ENCODE measurements at regions of chr3 and their contacts with region 1.

Region 1: DNA sequence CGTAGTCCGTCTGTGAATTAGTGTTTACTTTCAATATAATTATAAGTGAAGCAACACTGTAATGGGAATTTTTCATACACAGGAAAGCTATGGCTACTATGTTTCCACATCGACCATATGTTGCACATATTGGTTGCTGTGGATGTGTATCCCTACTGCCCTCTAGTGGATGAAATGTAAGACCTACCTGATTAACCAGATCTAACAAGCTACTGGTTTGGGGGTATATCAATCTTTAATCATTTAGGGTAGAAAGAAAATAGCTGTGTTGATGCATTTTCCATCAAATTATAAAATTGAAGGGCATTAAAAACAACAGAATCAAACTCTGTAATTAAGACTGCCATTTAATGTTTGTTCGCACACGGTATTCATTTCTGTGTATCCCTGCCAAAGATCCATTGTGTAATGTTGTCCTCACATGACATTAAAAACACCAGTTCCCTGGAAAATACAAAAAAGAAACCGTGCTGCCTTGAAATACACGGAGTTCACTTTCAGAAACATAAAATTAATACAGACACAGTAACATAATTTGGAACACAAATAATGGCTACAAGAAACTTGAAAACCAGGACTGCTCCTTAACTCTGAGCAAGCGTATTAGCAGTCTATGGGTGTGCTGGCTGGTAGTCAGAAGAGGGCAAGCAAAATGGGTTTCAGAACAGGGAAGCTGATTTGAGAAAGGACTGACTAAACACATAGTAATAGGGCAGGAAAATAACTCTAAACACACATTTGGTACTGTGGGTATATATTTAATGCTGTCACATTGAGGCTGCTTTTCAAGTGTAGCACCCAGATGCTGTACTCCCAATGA is 125.1 kb downstream of the TIGIT start:
- H3K4me3 Mint-ChIP-seq: no peak overlapping the region
- H3K27ac Mint-ChIP-seq: no peak overlapping the region
- H3K4me1 Mint-ChIP-seq: no peaks in the 10 kb centered on the region
- H3K27me3 Mint-ChIP-seq: no peaks in the 10 kb centered on the region

Region 2: GRCh38 chr3:114128231-114128630 is 290.7 kb before region 1 on chr3:
- intact Hi-C with region 1: no loop called
- H3K4me3 Mint-ChIP-seq: no peak overlapping the region
- H3K27ac Mint-ChIP-seq: no peak overlapping the region
- H3K4me1 Mint-ChIP-seq: no peaks in the 10 kb centered on the region
- H3K27me3 Mint-ChIP-seq: no peaks in the 10 kb centered on the region

Region 3: DNA sequence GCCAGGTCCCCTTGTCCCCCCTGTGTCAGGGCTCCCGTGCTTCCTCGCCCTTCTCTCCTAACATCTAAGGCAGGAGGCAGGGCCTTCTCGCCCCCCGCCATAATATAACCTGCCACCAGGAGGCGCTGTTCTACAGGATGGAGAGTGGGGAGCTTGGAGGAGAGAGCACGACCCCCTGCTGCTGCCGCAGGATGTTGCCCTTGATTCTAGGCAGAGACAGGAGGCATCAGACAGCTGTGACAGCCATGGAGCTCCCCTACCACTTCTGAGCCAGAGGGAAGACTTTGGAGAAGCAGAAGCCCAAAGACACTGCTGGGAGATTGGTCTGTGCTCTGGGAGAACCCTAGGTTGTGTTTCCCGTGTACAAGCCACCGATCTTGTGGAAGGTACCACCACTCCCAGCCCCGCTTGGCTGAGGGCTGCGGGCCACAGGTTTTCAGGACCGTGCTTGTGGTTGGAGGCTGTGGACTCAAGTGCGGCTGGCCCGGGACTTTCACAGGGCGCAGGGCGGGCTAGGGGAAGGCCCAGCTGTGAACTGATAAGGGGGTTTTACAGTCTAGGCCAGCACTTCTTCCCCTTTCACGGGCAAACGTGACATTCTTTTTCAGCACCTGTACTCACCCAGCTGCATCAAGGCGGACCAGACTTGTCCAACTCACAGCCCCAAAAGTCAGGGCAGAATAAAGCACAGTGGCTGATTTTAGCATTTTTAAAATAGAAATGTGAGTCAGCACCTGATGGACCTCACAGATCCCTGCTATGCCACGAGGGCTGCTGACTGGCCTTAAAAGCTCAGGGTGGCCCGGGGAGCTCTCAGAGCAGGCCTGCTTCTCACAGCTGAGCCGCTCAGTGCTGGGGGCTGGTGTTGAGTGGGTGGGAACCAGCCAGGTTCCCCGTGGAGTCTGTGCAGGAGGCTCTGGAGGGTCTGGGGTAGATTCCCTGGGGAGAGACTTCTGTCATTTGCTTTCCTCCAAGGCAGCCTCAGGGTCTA is 127.7 kb before region 1 on chr3:
- intact Hi-C with region 1: loop called (anchors 5 kb)
- H3K4me3 Mint-ChIP-seq: no peak overlapping the region
- H3K27ac Mint-ChIP-seq: no peak overlapping the region
- H3K4me1 Mint-ChIP-seq: peaks cover 6% of the 10 kb centered on the region
- H3K27me3 Mint-ChIP-seq: no peaks in the 10 kb centered on the region

Region 4: DNA sequence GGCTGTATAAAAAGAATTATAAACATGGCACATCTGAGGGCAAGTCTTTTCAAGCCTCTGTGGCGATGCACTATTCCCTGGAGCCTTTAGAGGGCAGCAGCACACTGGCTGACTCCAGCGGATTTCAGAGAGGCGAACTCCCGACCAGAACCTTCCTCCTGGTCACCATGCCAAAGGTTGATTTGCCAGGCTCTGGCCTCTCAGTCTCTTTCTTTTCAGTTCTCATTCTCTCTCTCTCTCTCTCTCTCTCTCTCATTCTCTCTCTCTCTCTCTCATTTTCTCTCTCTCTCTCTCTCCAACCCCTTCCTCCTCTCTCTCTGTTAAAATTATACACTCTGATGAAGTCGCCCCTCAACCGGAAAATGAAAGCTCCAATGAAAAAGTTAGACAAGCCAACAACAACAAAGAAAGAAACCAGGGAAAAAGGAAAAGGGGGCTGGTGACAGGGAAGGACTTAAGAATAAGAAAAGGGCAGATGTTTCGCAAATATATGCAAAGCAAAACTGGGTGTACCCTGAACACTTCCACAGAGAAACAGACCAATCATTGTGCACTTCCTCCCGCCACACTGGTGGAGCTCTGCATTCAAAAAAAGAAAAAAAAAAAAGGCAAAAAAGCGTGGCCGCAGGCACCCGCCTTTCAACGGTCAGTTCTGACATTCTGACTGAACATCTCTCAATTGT is 34.9 kb before region 1 on chr3:
- intact Hi-C with region 1: loop called (anchors 2 kb)
- H3K4me3 Mint-ChIP-seq: peak overlapping the region; percentile 62
- H3K27ac Mint-ChIP-seq: peak overlapping the region; percentile 63
- H3K4me1 Mint-ChIP-seq: peaks cover 2% of the 10 kb centered on the region
- H3K27me3 Mint-ChIP-seq: no peaks in the 10 kb centered on the region

Region 5: GRCh38 chr3:114405202-114405990 is 13.5 kb before region 1 on chr3:
- intact Hi-C with region 1: no loop called
- H3K4me3 Mint-ChIP-seq: no peak overlapping the region
- H3K27ac Mint-ChIP-seq: no peak overlapping the region
- H3K4me1 Mint-ChIP-seq: no peaks in the 10 kb centered on the region
- H3K27me3 Mint-ChIP-seq: no peaks in the 10 kb centered on the region

Region 6: DNA sequence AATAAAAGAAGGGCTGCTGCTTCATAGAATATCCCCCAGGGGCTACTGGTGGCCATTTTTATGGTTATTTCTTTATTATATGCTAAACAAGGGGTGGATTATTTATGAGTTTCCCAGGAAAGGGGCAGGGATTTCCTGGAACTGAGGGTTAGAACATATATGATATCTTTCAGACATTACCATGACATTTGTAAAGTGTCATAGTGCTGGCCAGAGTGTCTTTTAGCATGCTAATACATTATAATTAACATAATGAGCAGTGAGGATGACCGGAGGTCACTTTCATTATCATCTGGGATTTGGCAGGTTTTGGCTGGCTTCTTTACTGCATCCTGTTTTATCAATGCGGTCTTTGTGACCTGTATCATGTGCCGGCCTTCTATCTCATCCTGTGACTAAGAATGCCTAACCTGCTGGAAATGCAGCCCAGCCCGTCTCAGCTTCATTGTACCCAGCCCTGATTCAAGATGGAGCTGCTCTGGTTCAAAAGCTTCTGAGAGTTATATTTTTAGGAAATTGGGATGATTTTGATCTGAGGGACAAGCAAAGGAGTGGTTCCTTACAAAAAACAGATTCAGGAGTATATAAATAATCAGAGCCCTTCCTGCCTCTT is 737.2 kb after region 1 on chr3:
- intact Hi-C with region 1: no loop called
- H3K4me3 Mint-ChIP-seq: no peak overlapping the region
- H3K27ac Mint-ChIP-seq: no peak overlapping the region
- H3K4me1 Mint-ChIP-seq: no peaks in the 10 kb centered on the region
- H3K27me3 Mint-ChIP-seq: no peaks in the 10 kb centered on the region

Measured in dendritic cell treated with granulocyte-macrophage colony-stimulating factor and Interleukin-4, amounts not matched to agents 40 ng/mL and 50 ng/mL, for 4 days (primary cell).